ENCODE measurements at regions of chr3 and their contacts with region 1.

Region 1: DNA sequence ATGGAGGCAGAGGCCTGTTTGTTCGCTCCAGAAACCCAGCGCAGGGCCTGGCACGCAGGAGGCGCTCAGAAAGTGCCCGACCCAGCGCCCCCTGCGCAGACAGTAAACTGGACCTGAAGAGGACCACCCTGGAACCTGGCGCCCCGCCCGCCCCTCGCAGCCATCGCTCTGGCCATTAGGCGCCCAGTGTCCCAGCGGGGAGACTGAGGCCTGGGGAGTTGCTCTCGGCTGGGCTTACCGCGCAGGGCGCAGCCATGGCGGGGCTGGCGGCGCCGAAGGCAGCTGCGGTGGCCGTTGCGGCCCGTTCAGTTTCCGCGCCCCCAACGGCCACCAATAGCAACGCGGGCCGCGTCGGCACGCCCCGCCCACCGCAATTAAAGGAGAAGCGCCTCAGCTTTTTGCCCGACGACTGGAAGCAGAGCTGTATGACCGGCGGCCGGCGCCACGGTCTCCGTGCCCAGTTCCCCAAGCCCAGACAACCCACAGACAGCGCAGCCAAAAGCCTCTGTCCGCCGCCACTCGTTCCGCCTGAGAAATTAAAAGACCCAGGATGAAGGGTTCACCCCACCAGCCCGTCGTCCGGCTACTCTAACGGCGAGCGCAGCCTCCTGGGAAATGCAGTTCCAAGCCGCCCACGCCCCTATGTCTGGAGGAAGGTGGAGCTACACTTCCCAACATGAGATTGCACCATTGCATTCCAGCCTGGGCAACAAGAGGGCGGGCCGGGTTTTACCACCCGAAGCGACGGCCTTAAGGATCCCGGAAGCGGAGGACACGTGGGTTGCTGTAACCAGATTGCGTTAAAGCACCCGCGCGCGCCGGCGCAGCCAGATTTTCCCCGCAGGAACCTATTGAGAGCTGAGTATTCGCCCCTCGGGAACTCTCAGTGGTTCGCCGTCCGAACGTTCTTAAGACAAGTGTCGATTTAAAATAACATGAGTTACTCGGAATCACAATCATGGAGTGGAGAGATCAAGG is at the start of gene POC1A:
- DNase-seq: peak; percentile 95
- ATAC-seq: peak; percentile 89
- H3K4me3 Mint-ChIP-seq: peak within 1 kb of the TSS; percentile 80
- H3K27ac Mint-ChIP-seq: peak within 1 kb of the TSS; percentile 93
- H3K4me1 Mint-ChIP-seq: peaks cover 19% of the 10 kb centered on the region
- H3K27me3 Mint-ChIP-seq: no peaks in the 10 kb centered on the region
- total RNA-seq, gene POC1A: 23.4 to 26.1 TPM

Region 2: DNA sequence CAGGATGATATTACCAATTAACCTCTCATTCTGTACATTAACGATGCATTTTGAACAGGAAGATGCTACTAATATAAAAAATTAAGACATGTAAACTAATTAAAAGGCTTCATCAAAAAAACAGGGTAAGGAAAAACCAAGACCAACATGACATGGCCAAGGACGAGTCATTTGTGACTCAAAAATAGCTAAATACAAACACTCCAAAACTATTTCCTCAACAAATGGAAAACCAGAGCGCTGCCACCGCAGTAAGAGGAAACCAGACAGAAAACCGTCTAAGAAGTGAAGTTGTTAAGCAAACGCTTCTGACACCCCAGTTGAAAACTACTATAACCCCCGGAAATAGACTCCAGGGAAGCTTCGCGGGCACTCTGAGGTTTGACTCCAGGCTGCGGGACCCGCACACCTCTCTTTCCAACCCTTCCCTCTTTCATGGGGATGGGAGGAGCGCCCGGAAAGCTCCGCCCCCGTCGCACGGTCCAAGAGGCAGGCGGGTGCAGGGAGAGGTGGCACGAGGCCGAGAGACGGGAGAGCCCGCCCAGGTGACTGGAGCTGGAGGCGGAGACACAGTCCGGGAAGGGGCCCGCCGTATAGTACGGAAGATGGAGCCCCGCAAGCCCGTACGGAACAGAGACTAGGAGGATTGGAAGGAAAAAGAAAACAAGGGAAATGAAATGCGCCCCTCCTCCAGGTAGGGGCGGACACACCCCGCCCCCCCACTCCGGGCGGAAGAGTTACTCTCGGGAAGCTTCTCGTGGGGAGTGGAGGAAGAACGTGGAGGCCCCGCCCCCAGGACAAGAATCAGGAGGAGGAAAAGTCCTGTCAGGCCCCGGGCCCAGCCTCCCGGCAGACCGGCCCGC is 655.3 kb before region 1 on chr3:
- CTCF ChIA-PET with region 1: interaction called, 3 read pairs
- POLR2A ChIA-PET with region 1: interaction called, 6 read pairs
- intact Hi-C with region 1: loop called in 1 of 2 experiments (anchors 1 kb)
- DNase-seq: peak; percentile 94
- ATAC-seq: peak; percentile 75
- H3K4me3 Mint-ChIP-seq: peak overlapping the region; percentile 88
- H3K27ac Mint-ChIP-seq: peak overlapping the region; percentile 97
- H3K4me1 Mint-ChIP-seq: peaks cover 16% of the 10 kb centered on the region
- H3K27me3 Mint-ChIP-seq: no peaks in the 10 kb centered on the region

Region 3: DNA sequence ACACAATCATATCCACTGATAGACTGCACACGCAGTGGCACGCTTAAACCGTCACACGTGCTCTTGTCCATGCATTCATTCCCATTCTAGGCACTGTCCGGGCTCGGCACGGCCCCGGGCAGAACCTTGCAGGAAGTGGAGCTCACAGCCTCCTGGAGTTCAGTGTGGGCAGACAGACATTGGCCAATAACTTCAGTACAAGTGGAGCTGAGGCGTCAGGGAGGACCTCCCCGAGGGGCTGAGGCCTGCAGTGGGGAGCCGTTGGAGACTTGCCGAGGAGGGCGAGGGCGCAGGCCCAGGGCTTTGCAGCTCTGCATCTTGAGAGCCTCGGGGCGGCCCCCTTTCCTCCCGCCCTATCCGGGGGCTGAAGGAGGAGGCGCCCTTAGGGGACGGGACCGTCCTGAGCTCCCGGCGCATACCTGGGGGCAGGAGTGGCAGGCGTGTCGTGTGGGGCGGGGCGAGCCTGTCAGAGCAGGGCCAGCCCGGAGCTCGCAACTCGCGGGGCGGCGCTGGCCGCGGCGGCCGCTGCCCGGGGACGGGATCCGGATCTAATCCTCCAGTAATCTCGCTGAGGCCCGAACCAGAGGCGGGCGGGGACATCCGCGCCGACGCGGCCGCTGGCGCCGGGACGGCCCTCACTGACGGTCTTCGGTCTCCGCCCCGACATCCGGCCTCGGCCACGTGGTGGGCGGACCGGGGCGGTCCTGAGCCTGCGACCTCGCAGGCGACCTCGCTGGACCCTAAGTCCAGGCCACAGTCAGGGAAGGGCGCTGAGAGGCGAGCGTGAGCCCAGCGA is 171.4 kb before region 1 on chr3 and contains the start of gene ACY1:
- CTCF ChIA-PET with region 1: interaction called, 3 read pairs
- POLR2A ChIA-PET with region 1: no interaction called
- intact Hi-C with region 1: loop called in 1 of 2 experiments (anchors 1 kb)
- DNase-seq: peak; percentile 90
- ATAC-seq: peak; percentile 88
- H3K4me3 Mint-ChIP-seq: peak within 1 kb of the TSS; percentile 96
- H3K27ac Mint-ChIP-seq: peak within 1 kb of the TSS; percentile 96
- H3K4me1 Mint-ChIP-seq: peaks cover 20% of the 10 kb centered on the region
- H3K27me3 Mint-ChIP-seq: no peaks in the 10 kb centered on the region
- total RNA-seq, gene ACY1: 61.5 to 90.0 TPM

Region 4: GRCh38 chr3:52108302-52109232 is 45.8 kb before region 1 on chr3:
- CTCF ChIA-PET with region 1: no interaction called
- POLR2A ChIA-PET with region 1: no interaction called
- intact Hi-C with region 1: no loop called
- DNase-seq: no peak
- ATAC-seq: no peak
- H3K4me3 Mint-ChIP-seq: no peak overlapping the region
- H3K27ac Mint-ChIP-seq: no peak overlapping the region
- H3K4me1 Mint-ChIP-seq: no peaks in the 10 kb centered on the region
- H3K27me3 Mint-ChIP-seq: no peaks in the 10 kb centered on the region

Region 5: DNA sequence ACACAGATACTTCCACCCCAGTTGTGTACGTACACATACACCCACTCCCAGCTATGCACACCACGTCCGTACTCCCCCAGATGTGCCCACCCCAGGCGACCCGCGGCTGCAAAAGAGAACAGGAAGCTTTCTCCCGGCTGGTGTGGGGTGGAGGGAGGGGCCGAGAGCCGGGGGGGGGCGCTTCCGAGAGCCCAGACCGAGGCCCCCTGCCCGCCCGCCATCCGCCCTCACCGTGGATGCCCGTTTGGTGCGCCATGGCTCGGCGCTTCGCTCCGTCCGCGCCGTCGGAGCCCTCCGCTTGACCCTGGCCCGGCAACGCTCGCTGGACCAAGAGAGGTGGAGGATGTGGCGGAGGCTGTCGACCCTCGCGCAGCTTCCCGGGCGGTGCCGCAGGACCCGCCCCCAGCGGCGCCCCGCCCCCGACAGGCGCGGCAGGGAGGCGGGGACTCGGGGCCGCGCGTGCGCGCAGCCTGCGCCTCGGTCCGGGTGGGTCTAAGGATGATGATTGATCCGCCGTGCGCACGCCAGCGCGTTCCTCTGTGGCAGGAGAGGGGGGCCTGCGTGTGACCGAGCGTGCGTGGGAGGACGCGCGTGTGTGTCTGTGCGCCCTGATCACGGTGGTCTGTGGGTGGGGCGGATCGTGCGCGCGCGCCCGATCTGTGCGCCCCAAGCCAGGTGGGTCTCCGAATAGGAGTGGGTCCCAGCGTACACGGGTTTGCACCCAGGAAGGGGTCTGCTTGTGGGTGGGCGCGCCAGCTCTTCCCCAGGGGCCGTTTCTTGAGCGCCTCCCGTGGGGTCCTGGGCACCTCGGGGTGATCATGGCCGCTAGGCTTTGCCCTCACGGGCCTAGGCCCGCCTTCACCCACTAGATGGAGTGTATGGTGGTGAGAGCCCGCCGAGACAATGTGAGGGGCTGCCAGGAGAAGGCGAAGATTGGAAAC is 84.6 kb after region 1 on chr3 and contains the start of gene TWF2:
- CTCF ChIA-PET with region 1: interaction called, 3 read pairs
- POLR2A ChIA-PET with region 1: no interaction called
- intact Hi-C with region 1: loop called in 1 of 2 experiments (anchors 1 kb)
- DNase-seq: peak; percentile 92
- ATAC-seq: peak; percentile 67
- H3K4me3 Mint-ChIP-seq: peak within 1 kb of the TSS; percentile 99
- H3K27ac Mint-ChIP-seq: peak within 1 kb of the TSS; percentile 99
- H3K4me1 Mint-ChIP-seq: peaks cover 70% of the 10 kb centered on the region
- H3K27me3 Mint-ChIP-seq: no peaks in the 10 kb centered on the region
- total RNA-seq, gene TWF2: 85.0 to 93.5 TPM

Region 6: GRCh38 chr3:52536369-52537164 is 382.2 kb after region 1 on chr3 and contains the start of gene UQCC5:
- CTCF ChIA-PET with region 1: no interaction called
- POLR2A ChIA-PET with region 1: no interaction called
- intact Hi-C with region 1: loop called in 1 of 2 experiments (anchors 1 kb)
- DNase-seq: peak; percentile 99
- ATAC-seq: peak; percentile 91
- H3K4me3 Mint-ChIP-seq: peak within 1 kb of the TSS; percentile 100
- H3K27ac Mint-ChIP-seq: peak within 1 kb of the TSS; percentile 99
- H3K4me1 Mint-ChIP-seq: peaks cover 49% of the 10 kb centered on the region
- H3K27me3 Mint-ChIP-seq: no peaks in the 10 kb centered on the region
- total RNA-seq, gene UQCC5: 12.0 to 12.7 TPM

Measured in activated CD4-positive, alpha-beta T cell treated with anti-CD3 and anti-CD28 coated beads for 36 hours (primary cell).